PC-9 (cell line): ENCODE measurements at regions of chr7 and their contacts with region 1.

Region 1: GRCh38 chr7:17370092-17370491 is 71.6 kb downstream of the AHR start:
- DNase-seq: peak; percentile 56 to 76
- H3K4me3 ChIP-seq: no peak overlapping the region
- H3K27ac ChIP-seq: peak overlapping the region; percentile 94
- H3K4me1 ChIP-seq: peaks cover 51% of the 10 kb centered on the region
- H3K27me3 ChIP-seq: no peaks in the 10 kb centered on the region
- CTCF ChIP-seq: no peak

Region 2: GRCh38 chr7:16989811-16990413 is 380.2 kb before region 1 on chr7:
- CTCF ChIA-PET with region 1: no interaction called
- POLR2A ChIA-PET with region 1: no interaction called
- intact Hi-C with region 1: loop called (anchors 2 kb)
- DNase-seq: peak; percentile 92 to 99
- H3K4me3 ChIP-seq: peak overlapping the region; percentile 32; the same call in 1 of the 2 replicates
- H3K27ac ChIP-seq: peak overlapping the region; percentile 84
- H3K4me1 ChIP-seq: peaks cover 40% of the 10 kb centered on the region
- H3K27me3 ChIP-seq: no peaks in the 10 kb centered on the region
- CTCF ChIP-seq: no peak

Region 3: DNA sequence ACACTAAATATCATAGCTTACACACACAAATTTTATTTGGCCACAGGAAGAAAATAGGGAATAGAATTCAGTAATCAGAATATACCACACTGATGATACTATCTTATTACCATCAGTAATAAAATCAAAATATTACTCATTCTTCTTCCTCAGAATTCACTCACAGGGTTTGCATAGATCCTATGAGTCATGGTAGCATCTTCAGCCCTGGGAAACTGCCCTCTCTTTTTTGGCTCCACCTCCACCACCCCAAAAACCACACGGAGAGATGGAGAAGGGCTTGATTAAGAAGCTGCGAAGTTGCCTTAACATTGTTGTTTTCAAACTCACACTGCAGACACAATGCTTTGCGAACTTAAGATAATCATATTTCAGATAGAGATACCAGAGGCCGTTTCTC is 225.8 kb before region 1 on chr7:
- CTCF ChIA-PET with region 1: no interaction called
- POLR2A ChIA-PET with region 1: no interaction called
- intact Hi-C with region 1: loop called (anchors 5 kb)
- DNase-seq: peak in 1 of 2 experiments; percentile 12
- H3K4me3 ChIP-seq: no peak overlapping the region
- H3K27ac ChIP-seq: no peak overlapping the region
- H3K4me1 ChIP-seq: peaks cover 15% of the 10 kb centered on the region; the same call in 1 of the 2 replicates
- H3K27me3 ChIP-seq: no peaks in the 10 kb centered on the region
- CTCF ChIP-seq: no peak

Region 4: GRCh38 chr7:17355050-17355449 is 15.0 kb before region 1 on chr7:
- CTCF ChIA-PET with region 1: no interaction called
- POLR2A ChIA-PET with region 1: no interaction called
- intact Hi-C with region 1: no loop called
- DNase-seq: no peak
- H3K4me3 ChIP-seq: no peak overlapping the region
- H3K27ac ChIP-seq: no peak overlapping the region
- H3K4me1 ChIP-seq: no peaks in the 10 kb centered on the region
- H3K27me3 ChIP-seq: no peaks in the 10 kb centered on the region
- CTCF ChIP-seq: no peak

Region 5: DNA sequence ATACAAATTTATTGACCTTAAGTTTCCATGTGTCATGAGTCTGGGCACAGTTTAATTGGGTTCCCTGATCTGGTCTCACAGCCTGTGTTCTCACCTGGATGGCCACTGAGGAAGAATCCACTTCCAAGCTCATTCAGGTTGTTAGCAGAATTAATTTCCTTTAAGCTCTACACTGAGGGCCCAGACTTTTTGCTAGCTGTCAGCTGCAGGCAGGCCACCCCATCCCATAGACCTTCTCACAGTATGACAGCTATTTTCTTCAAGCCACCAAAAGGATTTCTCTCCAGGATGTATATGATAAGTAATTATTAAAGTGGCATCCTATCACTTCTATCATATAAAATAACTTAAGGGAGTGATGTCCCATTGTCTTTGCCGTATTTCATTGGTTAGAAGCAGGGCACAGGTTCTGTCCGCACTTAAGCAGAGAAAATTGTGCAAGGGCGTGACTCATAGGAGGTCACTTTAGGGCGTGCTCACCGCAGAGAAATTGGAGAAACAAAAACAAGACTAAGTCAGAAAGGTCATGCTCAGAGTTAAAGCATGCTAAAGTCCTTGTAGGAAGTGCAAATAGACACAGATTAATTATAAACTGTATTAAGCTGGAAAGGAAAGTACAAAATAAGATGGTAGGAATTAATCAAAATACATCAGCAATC is 38.3 kb after region 1 on chr7:
- CTCF ChIA-PET with region 1: interaction called, 4 read pairs
- POLR2A ChIA-PET with region 1: no interaction called
- intact Hi-C with region 1: loop called (anchors 1 kb)
- DNase-seq: peak; percentile 79 to 97
- H3K4me3 ChIP-seq: peak overlapping the region; percentile 4; the same call in 1 of the 2 replicates
- H3K27ac ChIP-seq: peak overlapping the region; percentile 73
- H3K4me1 ChIP-seq: peaks cover 57% of the 10 kb centered on the region
- H3K27me3 ChIP-seq: no peaks in the 10 kb centered on the region
- CTCF ChIP-seq: no peak

Region 6: GRCh38 chr7:17523813-17524741 is 154.0 kb after region 1 on chr7:
- CTCF ChIA-PET with region 1: no interaction called
- POLR2A ChIA-PET with region 1: no interaction called
- intact Hi-C with region 1: loop called (anchors 2 kb)
- DNase-seq: peak; percentile 64 to 94
- H3K4me3 ChIP-seq: no peak overlapping the region
- H3K27ac ChIP-seq: peak overlapping the region; percentile 24
- H3K4me1 ChIP-seq: peaks cover 12% of the 10 kb centered on the region
- H3K27me3 ChIP-seq: no peaks in the 10 kb centered on the region
- CTCF ChIP-seq: no peak

Region 7: DNA sequence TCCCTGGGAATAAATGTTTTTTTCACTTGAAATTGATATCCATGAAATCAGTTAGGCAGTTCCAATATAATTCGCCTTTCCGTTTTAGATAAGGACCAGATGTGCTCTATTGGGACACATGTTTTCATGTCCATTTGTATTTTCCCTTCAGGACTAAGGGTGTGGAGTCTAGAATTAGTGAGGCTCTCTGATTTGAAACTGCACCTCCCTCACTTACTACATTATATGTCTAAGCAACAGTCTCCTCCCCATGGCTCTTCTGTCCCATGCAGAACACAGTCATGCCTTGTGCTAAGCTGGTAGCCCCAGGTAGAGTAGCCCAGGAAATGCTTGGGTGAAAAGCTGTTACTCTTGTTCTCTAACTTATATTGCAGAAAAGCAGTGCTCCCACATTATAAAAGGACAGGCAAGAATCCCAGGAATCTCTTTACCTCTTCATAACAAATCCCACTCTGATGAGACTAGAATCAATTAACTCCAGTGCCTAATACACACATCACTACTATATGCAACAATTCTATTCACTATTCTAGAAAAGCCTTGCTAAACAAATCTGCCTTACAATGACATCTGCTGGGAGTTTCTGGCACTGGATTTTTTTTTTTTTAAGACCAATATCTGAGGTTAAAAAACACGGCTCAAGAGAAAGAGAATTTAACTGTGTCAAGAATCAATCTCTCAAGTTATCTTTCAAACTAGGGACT is 276.3 kb after region 1 on chr7:
- CTCF ChIA-PET with region 1: no interaction called
- POLR2A ChIA-PET with region 1: no interaction called
- intact Hi-C with region 1: loop called (anchors 5 kb)
- DNase-seq: peak; percentile 4 to 43
- H3K4me3 ChIP-seq: no peak overlapping the region
- H3K27ac ChIP-seq: no peak overlapping the region
- H3K4me1 ChIP-seq: no peaks in the 10 kb centered on the region
- H3K27me3 ChIP-seq: no peaks in the 10 kb centered on the region
- CTCF ChIP-seq: peak; percentile 71